ENCODE measurements at regions of chr4 and their contacts with region 1.

Region 1: GRCh38 chr4:183840311-183840710 is 64.8 kb upstream of the STOX2 start:
- DNase-seq: peak; percentile 78
- H3K4me3 ChIP-seq: no peak overlapping the region
- H3K27ac ChIP-seq: no peak overlapping the region
- H3K4me1 ChIP-seq: peaks cover 40% of the 10 kb centered on the region
- H3K27me3 ChIP-seq: no peaks in the 10 kb centered on the region
- CTCF ChIP-seq: peak; percentile 91

Region 2: GRCh38 chr4:184156163-184156920 is 316.0 kb after region 1 on chr4:
- intact Hi-C with region 1: loop called (anchors 5 kb)
- DNase-seq: no peak
- H3K4me3 ChIP-seq: peak overlapping the region; percentile 2
- H3K27ac ChIP-seq: peak overlapping the region; percentile 73
- H3K4me1 ChIP-seq: peaks cover 28% of the 10 kb centered on the region
- H3K27me3 ChIP-seq: no peaks in the 10 kb centered on the region
- CTCF ChIP-seq: no peak

Region 3: DNA sequence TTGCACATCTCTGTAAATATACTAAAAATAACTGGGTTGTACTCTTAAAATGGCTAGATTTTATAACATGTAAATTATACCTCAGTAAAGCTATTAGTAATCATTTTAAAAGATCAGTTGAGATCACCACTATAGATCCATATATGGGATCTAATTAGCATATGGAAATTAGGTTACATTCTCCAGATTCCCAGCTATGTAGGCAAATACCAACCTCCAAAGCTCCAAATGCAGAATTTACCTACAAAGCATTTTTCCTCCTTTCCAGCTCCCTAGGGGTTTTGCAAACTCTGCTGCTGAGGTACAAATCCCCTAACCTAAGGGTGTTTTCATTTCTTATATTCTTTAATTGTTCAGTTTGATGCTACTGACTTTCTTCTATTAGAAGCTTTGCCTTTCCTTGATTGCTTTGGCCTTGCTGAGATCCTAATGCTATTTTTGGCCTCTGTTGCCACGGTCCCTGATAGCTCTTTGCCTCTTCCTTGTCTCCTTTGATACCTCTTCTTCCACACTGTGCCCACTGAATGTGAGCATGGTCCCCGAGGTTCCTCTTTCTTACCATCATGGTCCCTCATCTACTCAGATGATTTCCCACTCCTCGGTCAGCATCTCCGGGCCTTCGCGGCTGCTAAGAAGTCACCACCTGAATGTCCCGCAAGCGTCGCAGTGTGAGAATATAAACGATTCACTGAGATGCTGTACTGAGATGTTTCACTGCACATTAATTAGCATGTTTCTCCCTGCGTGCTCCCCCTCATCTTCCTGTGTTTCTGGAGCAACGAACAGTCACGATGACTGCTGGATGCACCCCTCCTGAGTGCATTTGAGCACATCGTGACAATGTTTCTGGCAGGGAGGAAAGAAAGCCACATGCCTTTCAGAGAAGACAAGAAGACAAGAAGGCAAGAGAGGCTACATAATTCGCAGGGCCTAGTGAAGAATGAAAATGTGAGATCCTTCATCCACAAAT is 353.5 kb after region 1 on chr4:
- intact Hi-C with region 1: no loop called
- DNase-seq: no peak
- H3K4me3 ChIP-seq: no peak overlapping the region
- H3K27ac ChIP-seq: no peak overlapping the region
- H3K4me1 ChIP-seq: no peaks in the 10 kb centered on the region
- H3K27me3 ChIP-seq: no peaks in the 10 kb centered on the region
- CTCF ChIP-seq: no peak

Measured in left ventricle myocardium inferior (tissue), 1 donor.